Esophagus squamous epithelium (tissue), 5 donors: ENCODE measurements at regions of chr17 and their contacts with region 1.

Region 1: DNA sequence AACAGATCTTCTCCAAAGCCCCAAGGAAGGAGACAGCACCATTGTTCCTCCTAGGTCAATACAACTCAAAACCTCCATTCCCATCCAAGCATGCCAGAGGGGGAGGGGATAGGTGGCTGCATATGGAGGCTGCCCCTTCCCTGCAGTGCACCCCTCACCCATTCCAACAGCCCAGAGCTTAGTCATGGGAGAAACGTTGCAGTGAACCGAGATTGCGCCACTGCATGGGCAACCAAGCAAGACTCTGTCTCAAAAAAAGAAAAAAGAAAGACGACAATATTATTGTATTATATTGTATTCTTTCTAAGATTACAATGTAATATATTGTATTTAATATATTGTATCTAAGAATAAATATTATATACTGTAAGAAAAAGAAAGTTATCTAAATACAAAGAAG is 36.4 kb upstream of the CD300E start:
- DNase-seq: no peak
- H3K4me3 ChIP-seq: no peak overlapping the region
- H3K27ac ChIP-seq: no peak overlapping the region
- H3K4me1 ChIP-seq: no peaks in the 10 kb centered on the region
- H3K27me3 ChIP-seq: peaks cover 0 to 89% (median 2%) of the 10 kb centered on the region in 4 donors
- CTCF ChIP-seq: no peak
- POLR2A ChIP-seq: no peak

Region 2: GRCh38 chr17:74730491-74731346 is 70.8 kb after region 1 on chr17:
- intact Hi-C with region 1: loop called (anchors 5 kb)
- DNase-seq: no peak
- H3K4me3 ChIP-seq: no peak overlapping the region
- H3K27ac ChIP-seq: peak overlapping the region in 1 of 4 donors; percentile 5
- H3K4me1 ChIP-seq: peaks cover 0 to 3% (median 0%) of the 10 kb centered on the region in 3 donors
- H3K27me3 ChIP-seq: peaks cover 0 to 33% (median 0%) of the 10 kb centered on the region in 4 donors
- CTCF ChIP-seq: no peak
- POLR2A ChIP-seq: no peak